Lower leg skin (tissue), 4 donors: ENCODE measurements at regions of chr10 and their contacts with region 1.

Region 1: DNA sequence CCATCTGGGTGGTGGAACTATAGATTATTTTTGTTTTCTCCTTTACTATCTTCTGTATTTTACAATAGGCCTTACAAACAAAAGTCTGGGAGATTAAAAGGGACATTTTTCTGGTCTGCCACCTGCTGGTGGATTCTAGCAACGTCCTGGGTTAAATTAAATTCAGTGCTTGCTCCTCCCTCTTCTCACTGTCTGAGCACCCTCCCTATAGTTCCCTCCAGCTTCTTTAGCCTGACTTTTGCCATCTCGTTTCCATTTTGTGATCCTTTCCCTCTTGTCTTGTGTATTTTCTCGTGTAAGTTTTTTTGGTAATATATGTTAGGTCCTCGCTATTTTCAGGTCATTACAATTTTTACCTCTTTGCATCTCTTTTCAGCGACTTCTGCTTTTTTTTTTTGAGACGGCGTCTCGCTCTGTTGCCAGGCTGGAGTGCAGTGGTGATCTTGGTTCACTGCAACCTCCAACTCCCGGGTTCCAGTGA is 16.1 kb downstream of the ANKRD16 start:
- DNase-seq: peak; percentile 68 to 91
- H3K4me3 ChIP-seq: no peak overlapping the region
- CTCF ChIP-seq: peak in 1 of 3 donors; percentile 86
- POLR2A ChIP-seq: no peak

Region 2: GRCh38 chr10:4503076-4503475 is 1370.5 kb before region 1 on chr10:
- intact Hi-C with region 1: no loop called
- DNase-seq: no peak
- H3K4me3 ChIP-seq: no peak overlapping the region
- CTCF ChIP-seq: no peak
- POLR2A ChIP-seq: no peak

Region 3: DNA sequence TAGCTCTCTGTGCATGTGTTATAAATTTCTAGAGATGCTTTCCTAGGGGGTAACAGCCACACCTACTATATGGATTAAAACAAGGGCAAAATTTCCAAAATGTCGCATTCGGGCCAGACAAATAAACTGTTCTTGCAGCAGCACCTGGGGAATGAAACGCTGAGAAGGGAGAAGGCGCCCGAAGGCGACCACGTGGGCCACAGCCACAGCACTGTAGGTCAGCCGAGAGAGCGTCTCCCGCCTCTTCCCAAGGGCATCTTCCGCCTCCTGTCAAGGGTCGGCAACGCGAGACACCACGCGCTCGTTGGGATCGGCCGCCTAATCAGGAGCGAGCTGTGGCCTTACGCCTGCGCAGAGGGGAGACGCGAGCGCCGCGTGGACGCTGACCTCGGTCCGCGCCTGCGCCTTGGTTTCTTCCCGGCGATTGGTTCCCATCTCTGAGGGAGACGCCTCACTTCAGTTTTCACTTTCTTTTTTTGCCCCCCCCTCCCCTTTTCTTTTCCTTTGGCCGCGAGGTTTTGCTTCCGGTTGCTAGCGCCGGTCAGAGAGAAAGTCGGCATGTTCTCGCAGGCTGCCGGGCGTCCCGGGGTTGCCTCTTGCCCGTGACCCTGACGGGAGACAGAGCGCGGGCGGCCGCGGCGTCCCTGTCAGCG is 189.1 kb before region 1 on chr10 and contains the start of gene TASOR2:
- intact Hi-C with region 1: loop called (anchors 10 kb)
- DNase-seq: peak; percentile 96 to 99
- H3K4me3 ChIP-seq: peak within 1 kb of the TSS; percentile 94
- CTCF ChIP-seq: no peak
- POLR2A ChIP-seq: no peak
- total RNA-seq, gene TASOR2: 27.0 to 50.5 (median 35.4) TPM

Region 4: GRCh38 chr10:5862360-5862961 is 11.1 kb before region 1 on chr10:
- intact Hi-C with region 1: no loop called
- DNase-seq: no peak
- H3K4me3 ChIP-seq: no peak overlapping the region
- CTCF ChIP-seq: no peak
- POLR2A ChIP-seq: no peak

Region 5: DNA sequence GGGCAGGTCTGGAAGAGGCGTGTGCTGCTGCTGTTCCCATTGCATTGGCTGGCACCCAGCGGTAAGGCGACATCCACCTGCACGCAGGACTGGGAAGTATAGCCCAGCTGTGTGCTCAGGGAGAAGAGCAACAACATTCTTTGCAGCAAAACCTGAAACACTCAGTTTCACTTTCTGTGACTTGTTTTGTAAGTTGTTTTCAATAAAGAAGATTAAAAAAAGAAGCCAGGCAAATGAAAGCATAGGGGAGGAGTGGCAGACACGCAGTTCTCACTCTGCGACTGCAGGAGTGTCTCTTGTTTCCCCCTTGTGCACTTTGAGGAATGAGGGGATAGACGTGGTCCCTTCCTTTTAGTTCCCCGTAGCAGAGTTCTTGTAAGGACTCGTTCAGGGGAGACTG is 22.2 kb after region 1 on chr10:
- intact Hi-C with region 1: no loop called
- DNase-seq: no peak
- H3K4me3 ChIP-seq: no peak overlapping the region
- CTCF ChIP-seq: no peak
- POLR2A ChIP-seq: no peak

Region 6: GRCh38 chr10:6128591-6129251 is 255.2 kb after region 1 on chr10:
- intact Hi-C with region 1: no loop called
- DNase-seq: peak in 1 of 2 donors; percentile 82
- H3K4me3 ChIP-seq: no peak overlapping the region
- CTCF ChIP-seq: no peak
- POLR2A ChIP-seq: no peak